ENCODE measurements at regions of chr12 and their contacts with region 1.

Region 1: GRCh38 chr12:21501379-21501956 is at the starts of genes GOLT1B and RECQL:
- DNase-seq: peak; percentile 78 to 95
- ATAC-seq: peak; percentile 99 to 100 (median 99)
- H3K4me3 ChIP-seq: peak within 1 kb of the TSS; percentile 74 to 98 (median 90)
- H3K27ac ChIP-seq: peak within 1 kb of the TSS; percentile 68 to 92 (median 88)
- H3K4me1 ChIP-seq: peaks cover 0 to 66% (median 51%) of the 10 kb centered on the region in 9 donors
- H3K27me3 ChIP-seq: no peaks in the 10 kb centered on the region
- CTCF ChIP-seq: no peak
- total RNA-seq, gene GOLT1B: 12.0 to 25.4 (median 18.8) TPM
- total RNA-seq, gene RECQL: 18.4 to 40.5 (median 24.6) TPM

Region 2: GRCh38 chr12:21438643-21439042 is 62.8 kb before region 1 on chr12:
- intact Hi-C with region 1: loop called in 1 of 10 experiments (anchors 5 kb)
- DNase-seq: no peak
- ATAC-seq: no peak
- H3K4me3 ChIP-seq: peak overlapping the region in 9 of 10 donors; percentile 58 to 92 (median 73)
- H3K27ac ChIP-seq: peak overlapping the region in 3 of 10 donors; percentile 84 to 94 (median 93)
- H3K4me1 ChIP-seq: peaks cover 0 to 23% (median 11%) of the 10 kb centered on the region in 9 donors
- H3K27me3 ChIP-seq: peaks cover 0 to 3% (median 0%) of the 10 kb centered on the region in 7 donors
- CTCF ChIP-seq: no peak

Region 3: GRCh38 chr12:21657326-21658077 is 156.0 kb after region 1 on chr12 and contains the start of gene LDHB:
- intact Hi-C with region 1: loop called in 4 of 10 experiments (anchors 5 to 10 kb)
- DNase-seq: peak; percentile 94 to 97
- ATAC-seq: peak; percentile 98 to 100 (median 99)
- H3K4me3 ChIP-seq: peak within 1 kb of the TSS; percentile 55 to 92 (median 74)
- H3K27ac ChIP-seq: peak within 1 kb of the TSS; percentile 81 to 96 (median 93)
- H3K4me1 ChIP-seq: peaks cover 0 to 49% (median 25%) of the 10 kb centered on the region in 9 donors
- H3K27me3 ChIP-seq: no peaks in the 10 kb centered on the region
- CTCF ChIP-seq: no peak
- total RNA-seq, gene LDHB: 1,251 to 3,111 (median 2,389) TPM

Region 4: GRCh38 chr12:21677622-21678277 is 176.3 kb after region 1 on chr12:
- intact Hi-C with region 1: loop called in 3 of 10 experiments (anchors 5 to 10 kb)
- DNase-seq: no peak
- ATAC-seq: no peak
- H3K4me3 ChIP-seq: no peak overlapping the region
- H3K27ac ChIP-seq: no peak overlapping the region
- H3K4me1 ChIP-seq: peaks cover 0 to 17% (median under 1%) of the 10 kb centered on the region in 9 donors
- H3K27me3 ChIP-seq: no peaks in the 10 kb centered on the region
- CTCF ChIP-seq: no peak

Region 5: DNA sequence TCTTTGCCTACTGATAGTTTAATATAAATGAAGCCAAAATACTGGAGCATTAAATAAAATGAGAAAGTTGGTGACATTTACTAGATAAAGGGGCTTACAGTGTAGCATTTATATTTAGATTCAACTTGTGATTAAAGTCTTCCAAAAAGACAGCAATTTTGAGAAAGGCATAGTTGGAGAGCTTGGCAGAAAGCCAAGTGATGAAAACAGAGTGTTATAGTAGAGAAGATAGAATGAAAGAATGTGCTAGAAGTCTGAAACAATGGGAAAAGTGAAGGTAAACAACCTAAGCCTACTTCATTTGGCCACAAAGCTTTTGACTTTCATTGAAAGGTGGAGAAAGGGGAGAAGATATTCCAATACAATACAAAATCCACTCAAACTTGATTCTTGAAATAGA is 1539.3 kb after region 1 on chr12:
- intact Hi-C with region 1: no loop called
- DNase-seq: no peak
- ATAC-seq: no peak
- H3K4me3 ChIP-seq: no peak overlapping the region
- H3K27ac ChIP-seq: no peak overlapping the region
- H3K4me1 ChIP-seq: no peaks in the 10 kb centered on the region
- H3K27me3 ChIP-seq: no peaks in the 10 kb centered on the region
- CTCF ChIP-seq: no peak

Measured in heart right ventricle (tissue), 16 donors.